ENCODE measurements at regions of chr4 and their contacts with region 1.

Region 1: GRCh38 chr4:87838890-87839591 is 6.3 kb downstream of the MEPE start:
- H3K4me3 ChIP-seq: no peak overlapping the region
- H3K27ac ChIP-seq: no peak overlapping the region
- H3K4me1 ChIP-seq: no peaks in the 10 kb centered on the region
- CTCF ChIP-seq: no peak

Region 2: GRCh38 chr4:87543835-87544461 is 295.1 kb before region 1 on chr4:
- CTCF ChIA-PET with region 1: interaction called, 10 read pairs
- POLR2A ChIA-PET with region 1: no interaction called
- H3K4me3 ChIP-seq: no peak overlapping the region
- H3K27ac ChIP-seq: no peak overlapping the region
- H3K4me1 ChIP-seq: no peaks in the 10 kb centered on the region
- CTCF ChIP-seq: no peak

Region 3: GRCh38 chr4:87601361-87601760 is 237.7 kb before region 1 on chr4:
- CTCF ChIA-PET with region 1: no interaction called
- POLR2A ChIA-PET with region 1: no interaction called
- H3K4me3 ChIP-seq: no peak overlapping the region
- H3K27ac ChIP-seq: no peak overlapping the region
- H3K4me1 ChIP-seq: no peaks in the 10 kb centered on the region
- CTCF ChIP-seq: no peak

Region 4: GRCh38 chr4:87679449-87680169 is 159.4 kb before region 1 on chr4:
- CTCF ChIA-PET with region 1: interaction called, 39 read pairs
- POLR2A ChIA-PET with region 1: no interaction called
- H3K4me3 ChIP-seq: no peak overlapping the region
- H3K27ac ChIP-seq: no peak overlapping the region
- H3K4me1 ChIP-seq: no peaks in the 10 kb centered on the region
- CTCF ChIP-seq: peak; percentile 20; the same call in 1 of the 2 replicates

Region 5: DNA sequence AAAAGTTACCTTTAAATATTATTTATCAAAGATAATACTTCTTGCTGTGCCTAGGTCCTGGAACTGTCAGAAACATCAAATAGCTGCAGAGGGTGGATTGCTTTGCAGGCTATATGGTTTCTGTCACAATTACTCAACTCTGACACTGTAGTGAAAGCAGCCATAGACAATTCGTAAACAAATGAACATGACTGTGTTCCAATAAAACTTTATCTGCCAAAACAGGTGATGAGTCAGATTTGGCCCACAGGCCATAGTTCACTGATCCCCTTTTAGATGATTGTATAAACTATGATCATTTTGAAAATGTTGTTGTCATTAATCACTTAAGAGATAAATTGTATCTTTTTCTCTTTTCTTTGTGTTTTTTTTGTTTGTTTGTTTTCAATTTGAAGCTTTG is 14.7 kb before region 1 on chr4:
- CTCF ChIA-PET with region 1: no interaction called
- POLR2A ChIA-PET with region 1: no interaction called
- H3K4me3 ChIP-seq: no peak overlapping the region
- H3K27ac ChIP-seq: no peak overlapping the region
- H3K4me1 ChIP-seq: no peaks in the 10 kb centered on the region
- CTCF ChIP-seq: no peak

Measured in HEK293 (cell line).